Caco-2 (cell line): ENCODE measurements at regions of chr5 and their contacts with region 1.

Region 1: GRCh38 chr5:59174248-59174844 is 591.5 kb downstream of the RAB3C start:
- DNase-seq: peak; percentile 66
- H3K4me3 ChIP-seq: no peak overlapping the region
- H3K4me3 Mint-ChIP-seq: no peak overlapping the region
- H3K27ac Mint-ChIP-seq: no peak overlapping the region
- H3K4me1 ChIP-seq: peaks cover 37% of the 10 kb centered on the region
- H3K4me1 Mint-ChIP-seq: peaks cover 15% of the 10 kb centered on the region
- H3K27me3 ChIP-seq: no peaks in the 10 kb centered on the region
- H3K27me3 Mint-ChIP-seq: no peaks in the 10 kb centered on the region
- CTCF ChIP-seq: peak; percentile 93 to 94

Region 2: GRCh38 chr5:58871648-58872242 is 302.6 kb before region 1 on chr5:
- CTCF ChIA-PET with region 1: no interaction called
- POLR2A ChIA-PET with region 1: no interaction called
- intact Hi-C with region 1: loop called (anchors 1 kb)
- DNase-seq: peak in 1 of 2 experiments; percentile 53
- H3K4me3 ChIP-seq: no peak overlapping the region
- H3K4me3 Mint-ChIP-seq: no peak overlapping the region
- H3K27ac Mint-ChIP-seq: no peak overlapping the region
- H3K4me1 ChIP-seq: no peaks in the 10 kb centered on the region
- H3K4me1 Mint-ChIP-seq: no peaks in the 10 kb centered on the region
- H3K27me3 ChIP-seq: no peaks in the 10 kb centered on the region
- H3K27me3 Mint-ChIP-seq: peaks cover 3% of the 10 kb centered on the region
- CTCF ChIP-seq: peak; percentile 59 to 71

Region 3: GRCh38 chr5:58886315-58887207 is 287.8 kb before region 1 on chr5:
- CTCF ChIA-PET with region 1: interaction called, 8 read pairs
- POLR2A ChIA-PET with region 1: no interaction called
- intact Hi-C with region 1: loop called (anchors 1 kb)
- DNase-seq: peak; percentile 71 to 81
- H3K4me3 ChIP-seq: no peak overlapping the region
- H3K4me3 Mint-ChIP-seq: no peak overlapping the region
- H3K27ac Mint-ChIP-seq: no peak overlapping the region
- H3K4me1 ChIP-seq: peaks cover 10% of the 10 kb centered on the region
- H3K4me1 Mint-ChIP-seq: peaks cover 17% of the 10 kb centered on the region
- H3K27me3 ChIP-seq: no peaks in the 10 kb centered on the region; the same call in 1 of the 2 replicates
- H3K27me3 Mint-ChIP-seq: peaks cover 3% of the 10 kb centered on the region
- CTCF ChIP-seq: peak; percentile 89 to 93

Region 4: GRCh38 chr5:59039296-59040023 is 134.9 kb before region 1 on chr5:
- CTCF ChIA-PET with region 1: interaction called, 15 read pairs
- POLR2A ChIA-PET with region 1: no interaction called
- intact Hi-C with region 1: loop called (anchors 1 kb)
- DNase-seq: peak; percentile 78 to 80
- H3K4me3 ChIP-seq: peak overlapping the region; percentile 95
- H3K4me3 Mint-ChIP-seq: peak overlapping the region; percentile 69
- H3K27ac Mint-ChIP-seq: peak overlapping the region; percentile 10
- H3K4me1 ChIP-seq: peaks cover 39% of the 10 kb centered on the region
- H3K4me1 Mint-ChIP-seq: peaks cover 17% of the 10 kb centered on the region
- H3K27me3 ChIP-seq: no peaks in the 10 kb centered on the region
- H3K27me3 Mint-ChIP-seq: no peaks in the 10 kb centered on the region
- CTCF ChIP-seq: no peak

Region 5: GRCh38 chr5:59126708-59127573 is 47.4 kb before region 1 on chr5:
- CTCF ChIA-PET with region 1: interaction called, 6 read pairs
- POLR2A ChIA-PET with region 1: no interaction called
- intact Hi-C with region 1: loop called (anchors 1 kb)
- DNase-seq: peak; percentile 60 to 68
- H3K4me3 ChIP-seq: peak overlapping the region; percentile 30
- H3K4me3 Mint-ChIP-seq: no peak overlapping the region
- H3K27ac Mint-ChIP-seq: no peak overlapping the region
- H3K4me1 ChIP-seq: peaks cover 88% of the 10 kb centered on the region
- H3K4me1 Mint-ChIP-seq: peaks cover 7% of the 10 kb centered on the region
- H3K27me3 ChIP-seq: no peaks in the 10 kb centered on the region
- H3K27me3 Mint-ChIP-seq: no peaks in the 10 kb centered on the region
- CTCF ChIP-seq: no peak

Region 6: GRCh38 chr5:59161221-59162105 is 12.9 kb before region 1 on chr5:
- CTCF ChIA-PET with region 1: interaction called, 7 read pairs
- POLR2A ChIA-PET with region 1: no interaction called
- intact Hi-C with region 1: loop called (anchors 1 kb)
- DNase-seq: peak; percentile 80 to 83
- H3K4me3 ChIP-seq: peak overlapping the region; percentile 1; the same call in 1 of the 2 replicates
- H3K4me3 Mint-ChIP-seq: peak overlapping the region; percentile 72
- H3K27ac Mint-ChIP-seq: peak overlapping the region; percentile 89
- H3K4me1 ChIP-seq: peaks cover 60% of the 10 kb centered on the region
- H3K4me1 Mint-ChIP-seq: peaks cover 34% of the 10 kb centered on the region
- H3K27me3 ChIP-seq: no peaks in the 10 kb centered on the region
- H3K27me3 Mint-ChIP-seq: no peaks in the 10 kb centered on the region
- CTCF ChIP-seq: no peak

Region 7: DNA sequence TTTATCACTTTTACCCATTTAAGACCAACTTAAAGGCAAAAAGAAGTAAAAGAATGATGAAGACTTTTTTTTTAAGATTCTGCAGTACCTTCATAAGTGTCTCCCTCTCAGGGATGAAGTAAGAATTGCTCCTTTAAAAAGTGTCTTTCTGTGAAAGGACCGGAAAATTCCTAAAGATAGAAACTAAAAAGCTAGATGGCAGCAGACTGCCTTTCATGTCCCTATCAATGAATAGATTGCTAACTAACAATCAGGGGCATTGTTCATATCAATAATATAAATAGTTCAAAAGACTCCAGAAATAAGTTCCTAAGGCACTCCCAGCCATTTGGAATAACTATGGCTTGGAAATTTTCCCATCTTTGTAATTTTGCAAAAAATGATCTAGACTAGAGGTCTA is 161.2 kb after region 1 on chr5:
- CTCF ChIA-PET with region 1: interaction called, 11 read pairs
- POLR2A ChIA-PET with region 1: no interaction called
- intact Hi-C with region 1: no loop called
- DNase-seq: peak in 1 of 2 experiments; percentile 14
- H3K4me3 ChIP-seq: no peak overlapping the region
- H3K4me3 Mint-ChIP-seq: no peak overlapping the region
- H3K27ac Mint-ChIP-seq: no peak overlapping the region
- H3K4me1 ChIP-seq: no peaks in the 10 kb centered on the region
- H3K4me1 Mint-ChIP-seq: no peaks in the 10 kb centered on the region
- H3K27me3 ChIP-seq: no peaks in the 10 kb centered on the region; the same call in 1 of the 2 replicates
- H3K27me3 Mint-ChIP-seq: no peaks in the 10 kb centered on the region
- CTCF ChIP-seq: peak in 1 of 2 experiments; percentile 34